Esophagus muscularis mucosa (tissue), 4 donors: ENCODE measurements at regions of chr10 and their contacts with region 1.

Region 1: DNA sequence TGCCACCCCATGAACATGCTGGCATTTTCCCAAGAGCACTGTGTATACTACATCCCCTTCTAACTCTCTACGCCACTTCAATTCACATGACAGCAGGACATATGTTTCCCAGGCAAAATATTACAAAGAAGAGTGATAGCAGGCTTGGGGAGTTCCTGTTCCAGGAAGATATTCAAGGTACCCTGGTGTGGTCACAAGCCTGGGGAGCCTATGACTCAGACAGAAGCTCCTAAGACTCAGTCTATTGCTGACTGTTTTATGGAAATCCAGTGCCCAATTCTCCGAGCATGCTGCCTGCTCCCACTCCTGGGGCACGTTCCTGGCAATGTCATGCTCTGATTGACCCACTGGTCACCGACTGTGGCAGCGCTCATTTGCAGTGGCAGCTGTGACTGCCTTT is 23.5 kb upstream of the ABLIM1 start:
- DNase-seq: no peak
- H3K4me3 ChIP-seq: peak overlapping the region; percentile 5 to 45 (median 37)
- H3K27ac ChIP-seq: peak overlapping the region in 2 of 4 donors; percentile 47 to 61
- H3K4me1 ChIP-seq: peaks cover 33 to 51% (median 36%) of the 10 kb centered on the region in 4 donors
- H3K27me3 ChIP-seq: no peaks in the 10 kb centered on the region
- CTCF ChIP-seq: no peak
- EP300 ChIP-seq: no peak
- POLR2A ChIP-seq: no peak

Region 2: DNA sequence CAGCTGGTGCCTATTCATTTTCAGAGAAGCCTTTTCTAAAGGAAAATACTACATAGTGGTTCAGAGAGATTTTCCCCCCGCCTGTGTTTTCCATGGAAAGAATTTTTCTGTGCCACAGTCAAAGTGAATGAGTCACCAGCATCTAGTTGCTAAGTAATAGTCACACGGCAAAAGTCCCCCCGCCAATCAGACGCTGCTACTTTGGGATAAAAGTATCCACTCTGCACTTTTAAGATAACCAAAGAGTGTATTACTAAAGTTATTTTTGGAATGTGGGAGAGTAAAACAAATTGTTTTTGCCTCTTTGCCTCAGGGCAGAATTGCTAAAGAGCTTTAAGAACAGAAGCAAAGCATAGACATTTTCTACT is 47.0 kb before region 1 on chr10:
- intact Hi-C with region 1: loop called (anchors 2 kb)
- DNase-seq: no peak
- H3K4me3 ChIP-seq: no peak overlapping the region
- H3K27ac ChIP-seq: peak overlapping the region; percentile 61 to 79 (median 69)
- H3K4me1 ChIP-seq: peaks cover 53 to 59% (median 57%) of the 10 kb centered on the region in 4 donors
- H3K27me3 ChIP-seq: peaks cover 0 to 34% (median 0%) of the 10 kb centered on the region in 4 donors
- CTCF ChIP-seq: no peak
- EP300 ChIP-seq: no peak
- POLR2A ChIP-seq: no peak